ENCODE measurements at regions of chr20 and their contacts with region 1.

Region 1: GRCh38 chr20:36573103-36573794 is at the start of gene TGIF2:
- DNase-seq: peak; percentile 84 to 96 (median 90)
- ATAC-seq: peak; percentile 79
- H3K4me3 ChIP-seq: peak within 1 kb of the TSS; percentile 96 to 99
- H3K4me3 Mint-ChIP-seq: peak within 1 kb of the TSS; percentile 95
- H3K27ac ChIP-seq: peak within 1 kb of the TSS; percentile 92 to 100
- H3K27ac Mint-ChIP-seq: peak within 1 kb of the TSS; percentile 99
- H3K4me1 ChIP-seq: peaks cover 41% of the 10 kb centered on the region
- H3K4me1 Mint-ChIP-seq: peaks cover 43% of the 10 kb centered on the region
- H3K27me3 ChIP-seq: no peaks in the 10 kb centered on the region
- H3K27me3 Mint-ChIP-seq: no peaks in the 10 kb centered on the region
- CTCF ChIP-seq: no peak
- total RNA-seq, gene TGIF2: 50.4 to 51.1 TPM

Region 2: GRCh38 chr20:36550797-36551299 is 22.4 kb before region 1 on chr20:
- CTCF ChIA-PET with region 1: no interaction called
- POLR2A ChIA-PET with region 1: no interaction called
- intact Hi-C with region 1: loop called (anchors 1 kb)
- DNase-seq: no peak
- ATAC-seq: no peak
- H3K4me3 ChIP-seq: no peak overlapping the region
- H3K4me3 Mint-ChIP-seq: no peak overlapping the region
- H3K27ac ChIP-seq: no peak overlapping the region
- H3K27ac Mint-ChIP-seq: no peak overlapping the region
- H3K4me1 ChIP-seq: no peaks in the 10 kb centered on the region
- H3K4me1 Mint-ChIP-seq: peaks cover 2% of the 10 kb centered on the region
- H3K27me3 ChIP-seq: no peaks in the 10 kb centered on the region
- H3K27me3 Mint-ChIP-seq: no peaks in the 10 kb centered on the region
- CTCF ChIP-seq: no peak

Region 3: GRCh38 chr20:36591854-36592641 is 18.8 kb after region 1 on chr20:
- CTCF ChIA-PET with region 1: interaction called, 13 read pairs
- POLR2A ChIA-PET with region 1: interaction called, 77 read pairs
- intact Hi-C with region 1: loop called (anchors 1 to 2 kb)
- DNase-seq: peak in 5 of 9 experiments; percentile 54 to 81 (median 74)
- ATAC-seq: peak; percentile 55
- H3K4me3 ChIP-seq: no peak overlapping the region
- H3K4me3 Mint-ChIP-seq: no peak overlapping the region
- H3K27ac ChIP-seq: peak overlapping the region in 1 of 2 experiments; percentile 49
- H3K27ac Mint-ChIP-seq: peak overlapping the region; percentile 71
- H3K4me1 ChIP-seq: peaks cover 38% of the 10 kb centered on the region
- H3K4me1 Mint-ChIP-seq: peaks cover 53% of the 10 kb centered on the region
- H3K27me3 ChIP-seq: no peaks in the 10 kb centered on the region
- H3K27me3 Mint-ChIP-seq: no peaks in the 10 kb centered on the region
- CTCF ChIP-seq: no peak

Region 4: DNA sequence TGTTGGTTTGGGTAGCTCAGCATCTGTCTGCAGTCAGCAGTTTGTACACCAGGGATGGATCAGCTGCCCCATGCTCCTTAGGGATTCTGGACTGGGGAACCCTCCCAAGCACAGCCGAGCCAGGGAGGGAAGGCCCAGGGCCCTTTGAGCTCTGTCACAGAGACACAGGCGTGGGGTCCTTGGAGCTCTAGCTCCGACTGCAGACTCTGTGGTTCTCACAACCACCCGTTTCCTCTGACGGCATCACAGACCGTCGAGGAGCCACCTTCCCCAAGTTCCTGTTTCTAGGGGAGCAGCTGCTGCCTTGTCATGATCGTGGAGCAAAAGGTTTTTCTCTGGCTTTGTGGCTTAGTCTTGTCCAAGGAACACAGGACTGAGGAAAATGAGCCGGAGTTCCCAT is 72.7 kb after region 1 on chr20 and contains the start of gene SLA2:
- CTCF ChIA-PET with region 1: no interaction called
- POLR2A ChIA-PET with region 1: interaction called, 12 read pairs
- intact Hi-C with region 1: no loop called
- DNase-seq: peak; percentile 49 to 91 (median 76)
- ATAC-seq: peak; percentile 73
- H3K4me3 ChIP-seq: peak within 1 kb of the TSS; percentile 77 to 79
- H3K4me3 Mint-ChIP-seq: peak within 1 kb of the TSS; percentile 98
- H3K27ac ChIP-seq: peak within 1 kb of the TSS; percentile 77 to 84
- H3K27ac Mint-ChIP-seq: peak within 1 kb of the TSS; percentile 98
- H3K4me1 ChIP-seq: peaks cover 41% of the 10 kb centered on the region
- H3K4me1 Mint-ChIP-seq: peaks cover 58% of the 10 kb centered on the region
- H3K27me3 ChIP-seq: no peaks in the 10 kb centered on the region
- H3K27me3 Mint-ChIP-seq: no peaks in the 10 kb centered on the region
- CTCF ChIP-seq: no peak
- total RNA-seq, gene SLA2: 58.5 to 60.3 TPM

Region 5: DNA sequence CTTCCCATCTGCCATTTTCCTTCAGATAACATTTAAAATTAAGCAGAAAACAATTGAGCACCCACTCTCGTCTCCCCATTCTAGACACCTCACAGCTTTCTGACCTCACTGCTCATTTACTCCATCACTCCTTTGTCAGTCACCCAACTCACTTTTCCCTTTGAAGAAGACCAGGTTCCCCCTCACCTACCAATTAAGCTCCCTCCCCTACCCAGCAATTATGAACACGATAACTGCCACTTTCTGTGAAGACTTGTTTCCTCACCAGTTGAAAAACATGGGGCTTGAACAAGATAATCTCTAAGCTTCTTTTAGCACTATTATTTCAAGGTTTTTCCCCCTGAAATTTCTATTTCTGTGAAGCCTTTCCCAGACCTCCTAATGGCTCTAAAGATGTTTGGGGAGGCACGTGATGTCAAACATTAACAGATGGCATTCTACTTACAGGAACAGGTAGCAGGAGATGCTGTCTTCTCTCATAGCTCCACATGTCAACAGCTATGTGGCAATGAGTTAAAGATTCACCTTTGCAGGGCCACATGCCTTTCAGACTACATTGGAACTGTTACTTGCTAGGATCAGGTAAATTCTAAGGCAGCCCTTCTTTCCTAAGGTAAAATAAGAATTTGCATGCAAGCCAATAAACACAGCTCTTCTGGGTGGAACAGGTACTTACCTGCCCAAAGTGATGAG is 97.6 kb after region 1 on chr20:
- CTCF ChIA-PET with region 1: no interaction called
- POLR2A ChIA-PET with region 1: no interaction called
- intact Hi-C with region 1: no loop called
- DNase-seq: no peak
- ATAC-seq: no peak
- H3K4me3 ChIP-seq: no peak overlapping the region
- H3K4me3 Mint-ChIP-seq: no peak overlapping the region
- H3K27ac ChIP-seq: no peak overlapping the region
- H3K27ac Mint-ChIP-seq: no peak overlapping the region
- H3K4me1 ChIP-seq: no peaks in the 10 kb centered on the region
- H3K4me1 Mint-ChIP-seq: no peaks in the 10 kb centered on the region
- H3K27me3 ChIP-seq: no peaks in the 10 kb centered on the region
- H3K27me3 Mint-ChIP-seq: no peaks in the 10 kb centered on the region
- CTCF ChIP-seq: no peak

Region 6: GRCh38 chr20:36773597-36774390 is 200.5 kb after region 1 on chr20 and contains the start of gene DSN1:
- CTCF ChIA-PET with region 1: no interaction called
- POLR2A ChIA-PET with region 1: interaction called, 5 read pairs
- intact Hi-C with region 1: loop called in 1 of 2 experiments (anchors 1 kb)
- DNase-seq: peak; percentile 94 to 99 (median 98)
- ATAC-seq: peak; percentile 82
- H3K4me3 ChIP-seq: peak within 1 kb of the TSS; percentile 74 to 80
- H3K4me3 Mint-ChIP-seq: peak within 1 kb of the TSS; percentile 99
- H3K27ac ChIP-seq: peak within 1 kb of the TSS; percentile 66 to 92
- H3K27ac Mint-ChIP-seq: peak within 1 kb of the TSS; percentile 95
- H3K4me1 ChIP-seq: peaks cover 8% of the 10 kb centered on the region
- H3K4me1 Mint-ChIP-seq: peaks cover 11% of the 10 kb centered on the region
- H3K27me3 ChIP-seq: no peaks in the 10 kb centered on the region
- H3K27me3 Mint-ChIP-seq: no peaks in the 10 kb centered on the region
- CTCF ChIP-seq: no peak
- total RNA-seq, gene DSN1: 12.2 to 13.1 TPM

Region 7: DNA sequence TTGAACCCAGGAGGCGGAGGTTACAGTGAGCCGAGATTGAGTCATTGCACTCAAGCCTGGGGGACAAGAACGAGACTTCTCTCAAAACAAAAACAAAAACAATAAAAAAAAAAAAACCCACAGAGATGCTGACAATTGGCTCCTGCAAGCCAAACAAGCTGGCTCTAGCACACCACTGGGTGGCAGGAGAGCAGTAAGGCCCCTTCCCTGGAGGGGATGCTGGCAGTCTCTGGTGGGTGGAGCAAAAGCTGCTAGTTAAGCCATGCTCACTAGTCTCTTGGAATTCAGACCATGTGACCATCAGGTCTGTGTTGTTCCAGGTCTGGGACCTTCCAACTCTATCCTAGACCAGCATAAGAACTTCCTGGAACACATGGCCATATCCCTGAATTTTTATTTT is 219.2 kb after region 1 on chr20:
- CTCF ChIA-PET with region 1: no interaction called
- POLR2A ChIA-PET with region 1: no interaction called
- intact Hi-C with region 1: no loop called
- DNase-seq: no peak
- ATAC-seq: no peak
- H3K4me3 ChIP-seq: no peak overlapping the region
- H3K4me3 Mint-ChIP-seq: no peak overlapping the region
- H3K27ac ChIP-seq: no peak overlapping the region
- H3K27ac Mint-ChIP-seq: no peak overlapping the region
- H3K4me1 ChIP-seq: no peaks in the 10 kb centered on the region
- H3K4me1 Mint-ChIP-seq: no peaks in the 10 kb centered on the region
- H3K27me3 ChIP-seq: no peaks in the 10 kb centered on the region
- H3K27me3 Mint-ChIP-seq: no peaks in the 10 kb centered on the region
- CTCF ChIP-seq: no peak

Measured in CD8-positive, alpha-beta T cell (primary cell).